ENCODE measurements at regions of chr6 and their contacts with region 1.

Region 1: GRCh38 chr6:30483677-30484279 is 5.5 kb upstream of the HLA-E start:
- DNase-seq: peak; percentile 76
- ATAC-seq: peak; percentile 23
- H3K4me3 ChIP-seq: no peak overlapping the region
- H3K4me3 Mint-ChIP-seq: no peak overlapping the region
- H3K27ac ChIP-seq: no peak overlapping the region
- H3K27ac Mint-ChIP-seq: no peak overlapping the region
- H3K4me1 ChIP-seq: peaks cover 24 to 28% of the 10 kb centered on the region in 2 donors
- H3K4me1 Mint-ChIP-seq: peaks cover 33% of the 10 kb centered on the region
- H3K27me3 ChIP-seq: peaks cover 0 to 28% (median 21%) of the 10 kb centered on the region in 4 experiments
- H3K27me3 Mint-ChIP-seq: peaks cover 33% of the 10 kb centered on the region
- CTCF ChIP-seq: peak; percentile 84

Region 2: GRCh38 chr6:30453508-30454116 is 30.2 kb before region 1 on chr6:
- CTCF ChIA-PET with region 1: interaction called, 17 read pairs
- POLR2A ChIA-PET with region 1: no interaction called
- intact Hi-C with region 1: loop called (anchors 1 kb)
- DNase-seq: peak; percentile 88
- ATAC-seq: peak; percentile 90
- H3K4me3 ChIP-seq: no peak overlapping the region
- H3K4me3 Mint-ChIP-seq: peak overlapping the region; percentile 69
- H3K27ac ChIP-seq: no peak overlapping the region
- H3K27ac Mint-ChIP-seq: peak overlapping the region; percentile 63
- H3K4me1 ChIP-seq: peaks cover 41 to 43% of the 10 kb centered on the region in 2 donors
- H3K4me1 Mint-ChIP-seq: peaks cover 32% of the 10 kb centered on the region
- H3K27me3 ChIP-seq: peaks cover 0 to 87% (median 62%) of the 10 kb centered on the region in 4 experiments
- H3K27me3 Mint-ChIP-seq: peaks cover 75% of the 10 kb centered on the region
- CTCF ChIP-seq: peak; percentile 83

Region 3: DNA sequence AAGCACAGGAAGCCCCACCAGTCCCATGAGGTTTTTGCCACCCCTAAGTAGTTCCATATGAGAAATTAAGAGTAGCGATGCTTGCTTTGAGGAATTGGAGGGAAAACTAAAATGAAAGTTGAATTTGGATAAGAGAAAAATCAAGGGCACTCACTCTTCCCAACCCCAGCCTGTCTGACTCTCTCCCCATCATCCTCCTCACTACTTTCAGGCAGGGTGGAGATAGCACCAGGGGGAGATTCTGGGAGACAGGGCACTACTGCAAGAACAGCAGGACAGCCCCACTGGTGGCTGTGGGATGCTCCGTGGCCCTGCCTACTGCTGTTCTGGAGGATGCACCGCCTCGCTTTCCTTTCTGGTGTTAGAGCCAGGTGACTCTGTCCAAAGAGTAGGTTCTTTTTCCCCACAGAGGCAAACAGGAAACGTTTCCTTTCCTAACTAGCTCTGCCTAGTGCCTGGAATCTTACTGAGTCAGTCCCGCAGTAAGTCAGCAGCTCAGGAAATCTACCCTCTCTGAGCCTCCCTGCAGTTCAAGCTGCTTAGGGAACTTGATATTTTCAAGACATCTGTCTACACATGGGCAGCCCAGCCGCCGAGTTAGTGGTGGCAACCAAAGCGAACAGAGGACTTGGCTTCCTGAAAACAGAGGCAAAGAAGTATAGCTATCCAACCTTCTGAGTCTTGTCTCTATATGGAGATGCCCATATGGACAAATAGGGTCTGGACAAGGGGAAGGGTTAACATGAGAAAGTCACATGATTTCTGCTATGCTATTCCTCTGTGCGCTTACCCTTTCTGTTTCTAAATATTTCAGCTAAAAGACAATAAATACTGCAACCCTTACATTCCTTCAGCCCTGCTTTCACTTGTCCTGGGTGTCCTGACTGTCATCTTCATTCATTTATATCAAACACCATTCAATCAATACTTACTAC is 16.9 kb after region 1 on chr6:
- CTCF ChIA-PET with region 1: interaction called, 42 read pairs
- POLR2A ChIA-PET with region 1: no interaction called
- intact Hi-C with region 1: no loop called
- DNase-seq: peak; percentile 49
- ATAC-seq: peak; percentile 52
- H3K4me3 ChIP-seq: peak overlapping the region in 3 of 5 experiments; percentile 22 to 55 (median 27)
- H3K4me3 Mint-ChIP-seq: peak overlapping the region; percentile 77
- H3K27ac ChIP-seq: peak overlapping the region in 1 of 2 donors; percentile 48
- H3K27ac Mint-ChIP-seq: peak overlapping the region; percentile 58
- H3K4me1 ChIP-seq: peaks cover 25 to 38% of the 10 kb centered on the region in 2 donors
- H3K4me1 Mint-ChIP-seq: peaks cover 46% of the 10 kb centered on the region
- H3K27me3 ChIP-seq: no peaks in the 10 kb centered on the region
- H3K27me3 Mint-ChIP-seq: no peaks in the 10 kb centered on the region
- CTCF ChIP-seq: no peak

Region 4: DNA sequence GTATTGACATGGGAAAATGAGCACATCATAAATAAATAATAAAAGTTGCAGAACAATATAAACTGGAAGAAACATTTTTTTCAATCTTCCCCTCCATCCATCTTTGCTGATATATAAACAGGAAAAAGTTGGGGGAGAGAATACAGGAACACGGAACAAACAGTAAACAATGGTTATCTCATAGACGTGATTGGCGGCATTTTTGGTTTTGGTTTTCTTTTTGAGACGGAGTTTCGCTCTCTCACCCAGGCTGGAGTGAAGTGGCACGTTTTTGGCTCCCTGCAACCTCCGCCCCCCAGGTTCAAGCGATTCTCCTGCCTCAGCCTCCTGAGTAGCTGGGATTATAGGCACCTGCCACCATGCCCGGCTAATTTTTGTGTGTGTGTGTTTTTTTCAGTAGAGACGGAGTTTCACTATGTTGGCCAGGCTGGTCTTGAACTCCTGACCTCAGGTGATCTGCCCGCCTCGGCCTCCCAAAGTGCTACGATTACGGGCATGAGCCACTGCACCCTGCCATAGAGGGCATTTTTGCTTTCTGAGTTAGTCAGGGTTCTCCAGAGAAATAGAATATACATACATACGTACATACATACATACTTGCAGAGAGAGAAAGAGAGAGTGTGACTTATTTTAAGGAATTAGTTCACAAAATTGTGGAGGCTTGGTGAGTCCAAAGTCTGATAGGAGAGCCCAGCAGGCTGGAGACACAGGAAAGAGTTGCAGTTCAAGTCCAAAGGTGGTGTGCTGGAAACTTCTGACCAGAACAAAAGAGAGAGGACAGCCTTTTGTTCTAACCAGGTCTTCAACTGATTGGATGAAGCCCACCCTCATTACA is 49.9 kb after region 1 on chr6:
- CTCF ChIA-PET with region 1: interaction called, 681 read pairs
- POLR2A ChIA-PET with region 1: interaction called, 126 read pairs
- intact Hi-C with region 1: loop called (anchors 1 kb)
- DNase-seq: no peak
- ATAC-seq: no peak
- H3K4me3 ChIP-seq: no peak overlapping the region
- H3K4me3 Mint-ChIP-seq: peak overlapping the region; percentile 59
- H3K27ac ChIP-seq: no peak overlapping the region
- H3K27ac Mint-ChIP-seq: peak overlapping the region; percentile 50
- H3K4me1 ChIP-seq: peaks cover 28 to 38% of the 10 kb centered on the region in 2 donors
- H3K4me1 Mint-ChIP-seq: peaks cover 26% of the 10 kb centered on the region
- H3K27me3 ChIP-seq: no peaks in the 10 kb centered on the region
- H3K27me3 Mint-ChIP-seq: no peaks in the 10 kb centered on the region
- CTCF ChIP-seq: no peak

Region 5: DNA sequence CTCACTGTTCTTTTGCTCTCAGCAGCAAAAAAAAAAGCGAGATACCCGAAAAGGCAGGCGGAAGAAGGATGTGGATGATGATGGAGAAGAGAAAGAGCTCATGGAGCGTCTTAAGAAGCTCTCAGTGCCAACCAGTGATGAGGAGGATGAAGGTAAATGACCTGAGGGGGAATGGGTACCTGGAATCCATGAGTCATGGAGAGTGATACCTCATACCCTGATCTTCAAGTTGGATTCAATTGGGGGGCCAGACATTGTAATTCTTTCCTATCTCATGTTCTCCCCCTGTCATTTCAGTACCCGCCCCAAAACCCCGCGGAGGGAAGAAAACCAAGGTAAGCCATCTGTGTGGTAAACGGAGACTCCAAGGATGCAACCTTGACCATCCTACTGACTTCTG is 94.3 kb after region 1 on chr6:
- CTCF ChIA-PET with region 1: interaction called, 18 read pairs
- POLR2A ChIA-PET with region 1: no interaction called
- intact Hi-C with region 1: no loop called
- DNase-seq: no peak
- ATAC-seq: no peak
- H3K4me3 ChIP-seq: no peak overlapping the region
- H3K4me3 Mint-ChIP-seq: no peak overlapping the region
- H3K27ac ChIP-seq: no peak overlapping the region
- H3K27ac Mint-ChIP-seq: no peak overlapping the region
- H3K4me1 ChIP-seq: peaks cover 6 to 8% of the 10 kb centered on the region in 2 donors
- H3K4me1 Mint-ChIP-seq: peaks cover 22% of the 10 kb centered on the region
- H3K27me3 ChIP-seq: no peaks in the 10 kb centered on the region
- H3K27me3 Mint-ChIP-seq: no peaks in the 10 kb centered on the region
- CTCF ChIP-seq: no peak

Region 6: GRCh38 chr6:30672445-30673253 is 188.9 kb after region 1 on chr6 and contains the start of gene DHX16:
- CTCF ChIA-PET with region 1: interaction called, 42 read pairs
- POLR2A ChIA-PET with region 1: no interaction called
- intact Hi-C with region 1: loop called (anchors 1 kb)
- DNase-seq: peak; percentile 97
- ATAC-seq: peak; percentile 88
- H3K4me3 ChIP-seq: peak within 1 kb of the TSS; percentile 85 to 100 (median 98)
- H3K4me3 Mint-ChIP-seq: peak within 1 kb of the TSS; percentile 84
- H3K27ac ChIP-seq: peak within 1 kb of the TSS; percentile 54 to 75
- H3K27ac Mint-ChIP-seq: peak within 1 kb of the TSS; percentile 87
- H3K4me1 ChIP-seq: peaks cover 10 to 19% of the 10 kb centered on the region in 2 donors
- H3K4me1 Mint-ChIP-seq: peaks cover 29% of the 10 kb centered on the region
- H3K27me3 ChIP-seq: no peaks in the 10 kb centered on the region
- H3K27me3 Mint-ChIP-seq: no peaks in the 10 kb centered on the region
- CTCF ChIP-seq: peak; percentile 79
- total RNA-seq, gene DHX16: 51.1 and 58.3 TPM in 2 replicates

Region 7: GRCh38 chr6:31025595-31025994 is 541.8 kb after region 1 on chr6:
- CTCF ChIA-PET with region 1: no interaction called
- POLR2A ChIA-PET with region 1: no interaction called
- intact Hi-C with region 1: no loop called
- DNase-seq: no peak
- ATAC-seq: no peak
- H3K4me3 ChIP-seq: no peak overlapping the region
- H3K4me3 Mint-ChIP-seq: no peak overlapping the region
- H3K27ac ChIP-seq: no peak overlapping the region
- H3K27ac Mint-ChIP-seq: no peak overlapping the region
- H3K4me1 ChIP-seq: no peaks in the 10 kb centered on the region
- H3K4me1 Mint-ChIP-seq: no peaks in the 10 kb centered on the region
- H3K27me3 ChIP-seq: peaks cover 0 to 19% (median 2%) of the 10 kb centered on the region in 4 experiments
- H3K27me3 Mint-ChIP-seq: peaks cover 20% of the 10 kb centered on the region
- CTCF ChIP-seq: no peak

Measured in B cell (primary cell).